Cardiac septum (tissue), 1 donor: ENCODE measurements at regions of chr3 and their contacts with region 1.

Region 1: GRCh38 chr3:171829841-171830517 is 13.2 kb upstream of the TMEM212 start:
- DNase-seq: peak; percentile 89

Region 2: DNA sequence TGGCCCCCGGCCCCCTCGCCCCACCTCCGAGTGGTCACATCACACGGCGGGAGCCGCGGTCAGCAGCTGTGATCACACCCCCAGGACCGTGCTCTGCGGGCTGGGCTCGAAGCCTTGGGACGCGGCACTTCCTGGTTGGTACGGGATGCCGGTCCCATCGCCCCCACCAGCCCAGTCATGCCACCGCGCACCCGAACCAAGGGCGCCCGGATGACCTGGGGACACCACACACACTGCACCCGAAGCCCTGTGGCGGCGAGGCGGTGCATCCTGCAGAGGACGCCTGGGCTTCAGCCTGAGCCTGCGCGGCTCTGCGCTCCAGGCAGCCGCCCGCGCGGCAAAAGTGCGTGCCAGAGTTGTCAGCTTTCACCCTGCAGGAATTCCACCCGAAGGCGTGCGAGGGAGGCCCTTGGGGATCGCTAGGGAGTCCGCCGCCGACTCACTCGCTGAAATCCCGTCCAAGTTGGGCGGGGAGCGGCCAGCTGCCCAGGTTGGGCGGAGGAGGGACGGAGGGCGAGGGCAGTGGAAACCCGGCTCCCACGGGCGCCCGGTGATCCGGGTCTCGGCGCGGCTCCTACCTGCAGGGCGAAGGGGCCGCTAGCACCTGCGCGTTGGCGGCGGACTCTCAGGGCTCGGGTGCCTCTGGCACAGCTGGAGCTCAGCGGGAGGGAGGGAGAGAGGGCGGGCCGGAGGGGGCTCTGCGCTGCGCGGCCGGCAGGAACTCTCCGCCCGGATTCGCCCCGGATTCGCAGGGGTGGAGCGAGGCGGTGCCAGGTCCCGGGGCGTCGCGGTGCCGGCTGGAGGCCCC is 20.0 kb before region 1 on chr3 and contains the start of gene PLD1:
- intact Hi-C with region 1: loop called (anchors 1 kb)
- DNase-seq: peak; percentile 91
- total RNA-seq, gene PLD1: 56.5 TPM

Region 3: GRCh38 chr3:172332256-172333041 is 502.5 kb after region 1 on chr3:
- intact Hi-C with region 1: loop called (anchors 10 kb)
- DNase-seq: no peak